ENCODE measurements at regions of chr5 and their contacts with region 1.

Region 1: DNA sequence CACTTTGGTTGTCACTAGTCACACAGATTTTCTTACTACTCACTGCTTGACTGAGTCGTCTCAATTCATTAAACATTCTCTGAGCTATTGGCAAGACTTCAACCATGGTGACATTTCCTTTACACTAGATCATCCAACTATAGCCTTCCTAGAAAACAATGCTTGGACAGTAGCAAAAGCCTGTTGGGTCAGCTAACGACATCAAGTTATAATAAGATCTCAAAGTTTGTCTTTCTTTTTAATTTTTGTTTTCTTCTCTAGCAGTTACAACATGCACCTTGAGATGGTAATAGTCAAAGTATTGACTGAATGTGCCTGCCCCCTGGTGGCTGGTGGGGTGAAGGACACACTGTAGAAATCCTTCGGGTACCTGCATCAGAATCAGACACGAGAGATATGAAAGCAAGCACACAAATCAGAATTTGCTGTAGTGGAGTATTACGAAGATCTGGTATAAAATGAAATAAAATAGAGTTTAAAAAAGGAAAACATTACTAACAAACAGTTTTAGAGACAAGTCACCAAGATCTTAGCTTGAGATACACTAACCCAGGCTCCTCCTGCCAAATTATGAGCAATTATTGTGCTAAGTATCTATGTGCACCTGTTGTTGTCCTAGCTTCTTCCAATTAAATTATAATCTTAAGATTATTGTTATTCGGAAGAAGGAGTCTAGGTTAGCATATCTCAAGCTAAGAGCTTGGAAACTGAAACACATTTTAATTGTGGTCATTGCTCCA is 81.2 kb downstream of the ARL15 start:
- DNase-seq: peak; percentile 70
- ATAC-seq: peak in 6 of 8 donors; percentile 62 to 72 (median 66)
- H3K4me3 ChIP-seq: no peak overlapping the region
- H3K27ac ChIP-seq: no peak overlapping the region
- H3K4me1 ChIP-seq: peaks cover 0 to 49% (median 25%) of the 10 kb centered on the region in 9 donors
- H3K27me3 ChIP-seq: no peaks in the 10 kb centered on the region
- CTCF ChIP-seq: peak; percentile 79 to 94 (median 90)

Region 2: GRCh38 chr5:53170748-53171349 is 1058.4 kb before region 1 on chr5:
- intact Hi-C with region 1: loop called in 5 of 10 experiments (anchors 5 to 10 kb)
- DNase-seq: no peak
- ATAC-seq: peak in 1 of 8 donors; percentile 57
- H3K4me3 ChIP-seq: no peak overlapping the region
- H3K27ac ChIP-seq: no peak overlapping the region
- H3K4me1 ChIP-seq: peaks cover 4 to 29% (median 17%) of the 10 kb centered on the region in 9 donors
- H3K27me3 ChIP-seq: no peaks in the 10 kb centered on the region
- CTCF ChIP-seq: peak in 7 of 9 donors; percentile 46 to 70 (median 61)

Region 3: DNA sequence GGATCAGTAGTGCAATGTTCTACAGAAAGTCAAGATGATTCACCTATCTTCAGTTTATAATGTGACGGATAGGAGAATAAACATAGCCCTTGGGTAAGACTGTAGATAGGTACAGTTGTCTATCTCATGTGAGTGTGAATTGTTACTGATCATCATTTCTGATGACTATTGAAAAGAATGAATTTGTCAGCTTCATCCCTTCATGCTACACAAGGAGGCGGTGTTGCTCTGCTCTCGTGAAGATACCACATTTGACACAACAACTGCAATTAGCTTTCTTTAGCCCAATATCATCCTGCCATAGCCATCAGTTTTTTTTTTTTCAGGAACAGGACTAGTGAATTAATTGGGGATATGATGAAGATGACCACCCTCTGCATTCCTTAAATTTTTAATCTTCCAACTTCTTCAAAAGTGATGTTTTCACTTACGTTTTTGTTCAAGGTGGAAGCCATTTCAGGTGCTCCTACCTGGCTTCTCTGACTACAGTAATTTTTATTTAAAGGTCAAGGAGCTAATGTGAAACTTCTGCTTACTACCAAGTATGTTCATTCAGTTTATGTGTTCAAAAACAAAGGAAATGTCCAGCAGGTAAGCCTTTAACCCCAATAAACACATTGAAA is 966.8 kb before region 1 on chr5:
- intact Hi-C with region 1: loop called in 2 of 10 experiments (anchors 10 kb)
- DNase-seq: no peak
- ATAC-seq: peak in 1 of 8 donors; percentile 34
- H3K4me3 ChIP-seq: no peak overlapping the region
- H3K27ac ChIP-seq: no peak overlapping the region
- H3K4me1 ChIP-seq: no peaks in the 10 kb centered on the region
- H3K27me3 ChIP-seq: no peaks in the 10 kb centered on the region
- CTCF ChIP-seq: peak in 8 of 9 donors; percentile 4 to 54 (median 42)

Region 4: DNA sequence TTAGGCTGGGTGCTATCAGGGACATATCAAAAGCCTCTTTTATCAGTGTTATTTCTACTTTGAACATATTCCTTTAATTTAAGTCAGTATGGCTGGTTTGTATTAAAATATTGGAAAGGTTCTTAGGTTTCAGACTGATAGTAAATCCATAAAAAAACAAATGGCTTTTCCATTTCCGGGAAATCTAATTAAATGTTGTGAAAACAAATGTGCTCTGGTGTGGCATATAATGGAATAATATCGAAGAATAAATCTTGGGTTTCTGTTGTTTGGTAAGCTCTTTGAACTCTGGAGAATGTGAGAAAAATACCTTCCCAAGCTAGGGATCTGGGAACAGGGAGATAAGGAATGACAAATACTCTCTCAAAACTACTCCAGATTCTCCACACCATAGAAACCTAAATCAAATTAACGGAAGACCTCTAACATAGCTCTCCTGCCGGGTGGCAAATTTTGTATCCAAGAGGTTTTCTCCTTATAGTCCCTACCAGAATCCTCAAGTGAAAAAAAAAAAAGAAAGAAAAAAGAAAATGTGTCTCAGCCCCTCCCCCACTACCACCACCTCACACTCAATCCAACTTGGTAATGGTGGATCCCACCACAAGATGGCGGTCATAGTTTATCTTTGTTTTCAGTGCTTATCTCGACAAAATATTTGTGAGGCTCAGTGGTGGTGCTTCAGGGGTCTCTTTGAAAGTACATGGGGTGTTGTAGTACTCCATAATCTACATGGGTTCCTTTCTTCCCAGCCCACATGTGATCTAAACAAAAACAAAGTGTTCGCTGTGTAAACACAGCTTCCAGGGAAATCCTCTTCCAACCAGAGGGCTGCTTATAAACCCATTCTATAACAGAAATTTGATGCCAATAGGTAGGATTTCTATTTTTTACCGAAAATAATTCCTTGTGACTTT is 803.4 kb before region 1 on chr5:
- intact Hi-C with region 1: loop called in 1 of 10 experiments (anchors 5 kb)
- DNase-seq: no peak
- ATAC-seq: no peak
- H3K4me3 ChIP-seq: no peak overlapping the region
- H3K27ac ChIP-seq: no peak overlapping the region
- H3K4me1 ChIP-seq: peaks cover 0 to 7% (median 0%) of the 10 kb centered on the region in 9 donors
- H3K27me3 ChIP-seq: no peaks in the 10 kb centered on the region
- CTCF ChIP-seq: peak in 6 of 9 donors; percentile 13 to 45 (median 27)

Region 5: GRCh38 chr5:53560506-53561191 is 668.6 kb before region 1 on chr5 and contains the start of gene NDUFS4:
- intact Hi-C with region 1: loop called in 1 of 10 experiments (anchors 10 kb)
- DNase-seq: peak; percentile 77 to 95
- ATAC-seq: peak; percentile 95 to 98 (median 96)
- H3K4me3 ChIP-seq: peak within 1 kb of the TSS; percentile 69 to 96 (median 81)
- H3K27ac ChIP-seq: peak within 1 kb of the TSS; percentile 81 to 97 (median 92)
- H3K4me1 ChIP-seq: peaks cover 4 to 42% (median 25%) of the 10 kb centered on the region in 9 donors
- H3K27me3 ChIP-seq: peaks cover 0 to 21% (median 0%) of the 10 kb centered on the region in 7 donors
- CTCF ChIP-seq: peak in 2 of 9 donors; percentile 23 to 30
- total RNA-seq, gene NDUFS4: 156 to 268 (median 213) TPM

Region 6: GRCh38 chr5:53874409-53874808 is 354.8 kb before region 1 on chr5:
- intact Hi-C with region 1: loop called in 2 of 10 experiments (anchors 10 kb)
- DNase-seq: no peak
- ATAC-seq: no peak
- H3K4me3 ChIP-seq: no peak overlapping the region
- H3K27ac ChIP-seq: no peak overlapping the region
- H3K4me1 ChIP-seq: peaks cover 0 to 8% (median 0%) of the 10 kb centered on the region in 9 donors
- H3K27me3 ChIP-seq: no peaks in the 10 kb centered on the region
- CTCF ChIP-seq: peak in 3 of 9 donors; percentile 17 to 18 (median 17)

Measured in heart right ventricle (tissue), 16 donors.